Pancreas (tissue), 10 donors: ENCODE measurements at regions of chr11 and their contacts with region 1.

Region 1: DNA sequence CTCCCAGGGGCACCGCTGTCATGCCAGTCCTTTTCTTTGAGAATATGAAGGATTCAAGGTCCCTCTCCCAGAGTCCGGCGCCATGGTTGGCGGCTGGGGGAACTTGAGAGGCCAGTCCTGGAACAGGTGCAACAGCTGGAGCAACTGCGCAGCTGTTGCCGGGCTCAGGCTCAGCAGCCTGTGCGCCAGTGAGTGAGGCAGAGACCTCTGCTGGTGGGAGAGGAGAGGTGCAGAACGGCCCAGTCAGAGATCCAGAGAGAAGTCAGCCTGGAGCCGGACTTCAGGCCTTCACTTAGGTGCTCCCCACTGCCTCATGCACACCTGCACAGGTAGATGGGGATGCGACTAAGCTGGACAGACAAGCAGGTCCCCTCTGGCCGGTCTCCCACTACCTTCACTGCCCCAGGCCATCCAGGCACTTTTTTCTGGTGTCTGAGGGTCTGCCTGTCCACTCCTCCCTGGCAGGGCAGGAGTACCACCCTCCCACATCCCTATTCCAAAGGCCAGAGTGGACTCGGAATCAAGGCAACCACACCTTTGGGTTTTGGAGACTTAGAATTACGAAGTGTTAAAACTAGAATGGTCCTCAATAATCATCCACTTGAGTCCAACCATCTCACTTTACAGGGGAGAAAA is 4.6 kb downstream of the CHRDL2 start:
- DNase-seq: peak; percentile 68 to 93 (median 83)
- ATAC-seq: peak; percentile 96 to 99 (median 99)
- H3K4me3 ChIP-seq: no peak overlapping the region
- H3K27ac ChIP-seq: no peak overlapping the region
- H3K4me1 ChIP-seq: no peaks in the 10 kb centered on the region
- H3K27me3 ChIP-seq: peaks cover 0 to 3% (median 1%) of the 10 kb centered on the region in 4 donors
- CTCF ChIP-seq: peak; percentile 75 to 90 (median 90)

Region 2: GRCh38 chr11:74611369-74611861 is 115.2 kb before region 1 on chr11:
- intact Hi-C with region 1: loop called in 1 of 3 experiments (anchors 5 kb)
- DNase-seq: no peak
- ATAC-seq: peak; percentile 71 to 82 (median 80)
- H3K4me3 ChIP-seq: no peak overlapping the region
- H3K27ac ChIP-seq: peak overlapping the region in 2 of 4 donors; percentile 2 to 48
- H3K4me1 ChIP-seq: peaks cover 17 to 28% (median 22%) of the 10 kb centered on the region in 3 donors
- H3K27me3 ChIP-seq: no peaks in the 10 kb centered on the region
- CTCF ChIP-seq: peak in 2 of 4 donors; percentile 16

Region 3: DNA sequence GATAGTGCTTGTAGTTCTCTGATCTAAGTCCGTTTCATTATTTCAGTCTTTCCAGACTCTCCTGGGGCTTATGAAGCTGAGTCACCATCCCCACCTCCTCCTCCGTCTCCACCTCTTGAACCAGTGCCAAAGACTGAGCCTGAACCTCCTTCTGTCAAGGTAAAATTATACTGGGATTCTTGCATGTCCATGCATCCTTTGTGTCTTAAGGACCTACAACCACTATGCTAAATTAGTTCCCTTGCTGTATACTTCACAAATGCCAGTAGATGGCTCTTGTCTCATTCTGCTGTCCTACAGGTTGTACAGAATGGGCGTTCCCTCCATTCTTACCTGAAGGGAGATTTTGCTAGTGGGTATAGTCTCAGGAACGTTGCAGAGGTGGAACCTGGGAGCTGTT is 92.1 kb before region 1 on chr11:
- intact Hi-C with region 1: loop called in 2 of 3 experiments (anchors 10 kb)
- DNase-seq: peak in 2 of 6 donors; percentile 19 to 33
- ATAC-seq: peak; percentile 49 to 92 (median 88)
- H3K4me3 ChIP-seq: no peak overlapping the region
- H3K27ac ChIP-seq: no peak overlapping the region
- H3K4me1 ChIP-seq: peaks cover 0 to 3% (median 0%) of the 10 kb centered on the region in 3 donors
- H3K27me3 ChIP-seq: no peaks in the 10 kb centered on the region
- CTCF ChIP-seq: peak in 2 of 4 donors; percentile 18 to 22

Region 4: GRCh38 chr11:74672956-74673692 is 53.5 kb before region 1 on chr11:
- intact Hi-C with region 1: no loop called
- DNase-seq: peak in 5 of 6 donors; percentile 58 to 88 (median 68)
- ATAC-seq: peak; percentile 54 to 86 (median 80)
- H3K4me3 ChIP-seq: no peak overlapping the region
- H3K27ac ChIP-seq: peak overlapping the region in 2 of 4 donors; percentile 59 to 70
- H3K4me1 ChIP-seq: peaks cover 0 to 8% (median 0%) of the 10 kb centered on the region in 3 donors
- H3K27me3 ChIP-seq: no peaks in the 10 kb centered on the region
- CTCF ChIP-seq: no peak

Region 5: GRCh38 chr11:74773481-74773880 is 46.8 kb after region 1 on chr11:
- intact Hi-C with region 1: no loop called
- DNase-seq: no peak
- ATAC-seq: no peak
- H3K4me3 ChIP-seq: no peak overlapping the region
- H3K27ac ChIP-seq: no peak overlapping the region
- H3K4me1 ChIP-seq: peaks cover 0 to 16% (median 7%) of the 10 kb centered on the region in 3 donors
- H3K27me3 ChIP-seq: no peaks in the 10 kb centered on the region
- CTCF ChIP-seq: no peak